ENCODE measurements at regions of chr16 and their contacts with region 1.

Region 1: DNA sequence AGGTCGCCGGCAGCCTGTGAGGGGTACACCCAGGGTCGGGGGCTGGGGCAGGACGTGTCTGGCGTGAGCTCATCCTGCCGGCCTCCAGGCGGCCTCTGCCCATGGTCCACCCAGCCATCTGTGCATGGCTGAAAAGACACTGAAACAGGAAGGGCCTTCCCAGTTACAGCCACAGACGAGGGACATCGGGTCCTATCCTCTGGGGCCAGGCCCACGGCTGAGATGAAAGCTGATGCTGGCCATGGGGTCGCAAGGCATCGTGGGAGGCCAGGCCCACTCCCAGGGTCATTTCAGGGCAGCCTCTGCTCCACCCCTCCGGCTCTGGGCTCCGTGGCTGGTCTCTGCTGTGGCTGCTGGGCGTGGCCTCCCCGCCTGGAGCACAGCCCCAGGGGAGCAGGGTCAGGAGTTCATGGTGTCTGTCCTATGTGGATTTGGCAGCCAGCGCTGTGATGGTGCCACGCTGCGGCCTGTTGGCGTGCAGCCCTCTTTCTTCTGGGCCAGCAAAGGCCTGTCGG is 16.6 kb upstream of the ATP6V0C start:
- DNase-seq: peak in 2 of 3 donors; percentile 38 to 61
- ATAC-seq: peak; percentile 9
- H3K4me3 ChIP-seq: no peak overlapping the region
- H3K4me1 ChIP-seq: peaks cover 12% of the 10 kb centered on the region
- CTCF ChIP-seq: no peak

Region 2: GRCh38 chr16:2339521-2340484 is 157.4 kb before region 1 on chr16:
- intact Hi-C with region 1: loop called in 1 of 2 experiments (anchors 10 kb)
- DNase-seq: peak; percentile 50 to 75 (median 74)
- ATAC-seq: peak; percentile 50
- H3K4me3 ChIP-seq: peak overlapping the region; percentile 14
- H3K4me1 ChIP-seq: peaks cover 10% of the 10 kb centered on the region
- CTCF ChIP-seq: no peak

Region 3: DNA sequence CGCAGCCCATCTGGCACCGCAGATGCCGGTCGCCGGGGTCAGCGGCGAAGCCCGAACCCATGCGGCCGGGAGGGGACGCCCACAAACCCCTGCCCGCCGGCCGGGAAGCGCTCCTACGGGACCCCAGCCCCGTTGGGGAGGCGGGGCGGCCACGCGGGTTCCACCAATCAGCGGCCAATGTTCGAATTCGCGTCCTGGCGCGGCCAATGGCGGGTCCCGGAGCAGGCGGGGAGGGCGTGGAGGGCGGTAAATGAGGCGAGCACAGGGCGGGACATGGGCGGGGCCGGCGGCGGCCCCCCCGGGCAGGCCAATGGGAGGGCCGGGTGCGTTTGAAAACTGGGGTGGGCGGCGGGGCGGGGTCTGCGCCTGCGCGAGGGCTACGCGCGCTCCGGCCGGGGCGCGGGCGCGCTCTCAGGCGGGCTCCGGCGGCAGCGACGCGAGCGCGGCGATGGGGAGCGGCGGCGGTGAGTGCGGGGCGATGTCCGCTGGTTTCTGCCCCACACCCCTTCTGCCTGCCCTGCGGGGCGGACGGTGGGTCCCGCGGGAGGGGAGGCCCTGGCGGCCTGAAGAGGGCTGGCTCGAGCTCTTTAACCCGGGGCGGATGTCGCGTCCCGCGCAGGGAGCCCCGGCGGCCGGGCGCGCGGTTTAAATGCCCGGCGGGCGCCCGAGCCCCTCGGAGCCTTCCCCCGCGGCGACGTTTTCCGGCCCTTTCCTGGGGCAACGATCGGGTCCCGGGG is 68.0 kb before region 1 on chr16 and contains the start of gene CCNF:
- intact Hi-C with region 1: no loop called
- DNase-seq: peak; percentile 98 to 99 (median 99)
- ATAC-seq: peak; percentile 96
- H3K4me3 ChIP-seq: peak within 1 kb of the TSS; percentile 56
- H3K4me1 ChIP-seq: peaks cover 8% of the 10 kb centered on the region
- CTCF ChIP-seq: no peak
- total RNA-seq, gene CCNF: 3.4 to 12.7 (median 3.7) TPM

Region 4: DNA sequence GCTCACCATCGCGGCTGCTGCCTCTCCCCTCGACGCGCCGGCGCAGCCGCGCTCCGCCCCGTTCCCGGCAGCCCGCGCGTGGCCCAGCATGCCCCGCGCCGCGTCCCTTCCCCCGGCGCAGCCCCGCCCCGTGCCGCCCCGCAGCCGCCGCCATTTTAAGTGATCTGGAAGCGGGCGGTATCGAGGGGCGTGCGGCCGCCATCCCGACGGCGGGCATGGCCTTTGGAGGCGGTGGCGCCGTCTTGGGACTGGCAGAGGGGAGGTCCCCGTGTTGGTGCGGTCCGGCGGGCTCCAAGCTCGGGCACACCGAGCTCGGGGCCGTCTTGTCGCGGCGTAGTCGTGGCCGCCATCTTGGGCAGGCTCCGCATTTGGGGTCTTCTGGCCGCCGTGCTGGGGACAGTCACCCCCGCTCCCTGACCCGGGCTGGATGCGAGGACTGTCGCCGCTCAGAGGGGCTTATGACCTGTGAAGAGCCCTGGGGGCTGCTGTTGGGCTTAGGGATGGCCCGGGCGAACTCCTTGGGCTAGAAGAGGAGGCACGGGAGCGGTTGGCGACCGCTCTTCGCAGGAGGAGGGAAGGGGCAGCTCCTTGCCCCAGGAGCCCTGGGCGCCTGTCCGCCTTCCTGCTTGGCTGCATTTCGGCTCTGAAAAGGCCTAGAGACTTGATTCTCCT is 280.2 kb after region 1 on chr16 and contains the start of gene ELOB:
- intact Hi-C with region 1: no loop called
- DNase-seq: peak; percentile 90 to 94 (median 92)
- ATAC-seq: peak; percentile 93
- H3K4me3 ChIP-seq: peak within 1 kb of the TSS; percentile 97
- H3K4me1 ChIP-seq: peaks cover 16% of the 10 kb centered on the region
- CTCF ChIP-seq: no peak
- total RNA-seq, gene ELOB: 231 to 296 (median 285) TPM

Region 5: GRCh38 chr16:2919511-2920255 is 422.5 kb after region 1 on chr16:
- intact Hi-C with region 1: no loop called
- DNase-seq: peak in 1 of 3 donors; percentile 68
- ATAC-seq: peak; percentile 69
- H3K4me3 ChIP-seq: no peak overlapping the region
- H3K4me1 ChIP-seq: peaks cover 5% of the 10 kb centered on the region
- CTCF ChIP-seq: peak; percentile 89

Measured in mucosa of descending colon (tissue), 3 donors.